Activated CD4-positive, alpha-beta T cell treated with anti-CD3 and anti-CD28 coated beads, Interleukin-2, amount 10 ng/mL, durations not matched to agents 24 days and 14 days (primary cell): ENCODE measurements at regions of chr1 and their contacts with region 1.

Region 1: GRCh38 chr1:70459496-70460225 is 48.6 kb downstream of the CTH start:
- DNase-seq: no peak
- H3K4me3 Mint-ChIP-seq: no peak overlapping the region
- H3K27ac Mint-ChIP-seq: no peak overlapping the region
- H3K4me1 Mint-ChIP-seq: no peaks in the 10 kb centered on the region
- H3K27me3 Mint-ChIP-seq: peaks cover 7% of the 10 kb centered on the region

Region 2: GRCh38 chr1:70504176-70504820 is 44.6 kb after region 1 on chr1:
- intact Hi-C with region 1: loop called (anchors 5 kb)
- DNase-seq: no peak
- H3K4me3 Mint-ChIP-seq: no peak overlapping the region
- H3K27ac Mint-ChIP-seq: no peak overlapping the region
- H3K4me1 Mint-ChIP-seq: peaks cover 2% of the 10 kb centered on the region
- H3K27me3 Mint-ChIP-seq: peaks cover 11% of the 10 kb centered on the region